Activated CD4-positive, alpha-beta T cell treated with anti-CD3 and anti-CD28 coated beads for 36 hours (primary cell): ENCODE measurements at regions of chr13 and their contacts with region 1.

Region 1: DNA sequence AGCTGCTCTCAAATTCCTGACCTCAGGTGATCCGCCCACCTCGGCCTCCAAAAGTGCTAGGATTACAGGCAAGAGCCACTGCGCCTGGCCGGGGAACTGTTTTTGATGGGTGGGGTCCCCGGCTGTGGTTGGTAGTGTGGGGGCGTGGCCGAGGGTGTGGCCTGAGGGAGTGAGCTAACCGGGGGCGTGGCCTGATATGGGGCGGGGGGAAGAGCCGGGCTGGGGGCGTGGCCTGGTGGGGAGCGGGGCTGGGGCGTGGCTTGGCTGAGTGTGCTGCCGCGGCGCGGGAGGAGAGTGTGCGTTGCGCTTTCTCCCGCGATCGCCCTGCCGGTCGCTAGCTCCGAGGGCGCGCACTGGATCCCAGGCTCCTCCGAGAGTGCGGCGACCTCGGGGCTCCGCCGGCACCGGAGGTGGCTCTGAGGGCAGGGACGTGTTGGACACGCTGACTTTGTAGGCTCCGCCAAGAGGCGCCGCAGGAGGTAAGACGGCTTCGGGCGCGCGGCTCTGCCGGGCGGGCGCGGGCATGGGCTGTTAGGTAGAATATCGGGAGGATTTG is at the start of gene SPATA13:
- DNase-seq: peak; percentile 97
- ATAC-seq: peak; percentile 95
- H3K4me3 Mint-ChIP-seq: peak within 1 kb of the TSS; percentile 83
- H3K27ac Mint-ChIP-seq: no peak within 1 kb of the TSS
- H3K4me1 Mint-ChIP-seq: peaks cover 12% of the 10 kb centered on the region
- H3K27me3 Mint-ChIP-seq: peaks cover 9% of the 10 kb centered on the region
- total RNA-seq, gene SPATA13: 47.6 to 51.5 TPM

Region 2: GRCh38 chr13:23888658-23889614 is 271.6 kb before region 1 on chr13 and contains the start of gene MIPEP:
- CTCF ChIA-PET with region 1: no interaction called
- POLR2A ChIA-PET with region 1: no interaction called
- intact Hi-C with region 1: loop called in 1 of 2 experiments (anchors 1 kb)
- DNase-seq: peak; percentile 94
- ATAC-seq: peak; percentile 90
- H3K4me3 Mint-ChIP-seq: peak within 1 kb of the TSS; percentile 79
- H3K27ac Mint-ChIP-seq: peak within 1 kb of the TSS; percentile 75
- H3K4me1 Mint-ChIP-seq: peaks cover 23% of the 10 kb centered on the region
- H3K27me3 Mint-ChIP-seq: no peaks in the 10 kb centered on the region
- total RNA-seq, gene MIPEP: 13.2 to 15.5 TPM

Region 3: DNA sequence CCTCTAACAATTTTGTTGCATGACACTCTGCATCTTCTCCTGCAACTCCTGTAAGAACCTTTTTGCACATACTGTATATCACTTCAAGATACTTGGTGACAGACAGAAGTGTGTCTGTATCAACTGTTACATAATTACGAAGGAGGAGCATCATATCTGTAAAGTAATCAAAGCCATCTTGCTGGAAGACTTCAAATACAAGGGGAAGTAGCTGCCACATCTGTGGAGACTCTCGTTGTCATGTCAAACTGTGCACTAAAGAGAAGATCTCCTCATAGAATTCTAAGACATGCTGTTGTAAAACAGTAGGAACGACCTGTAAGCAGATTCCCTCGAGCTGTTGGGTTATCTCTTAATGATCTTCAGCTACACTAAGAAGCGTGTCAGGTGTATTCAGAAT is 38.0 kb before region 1 on chr13:
- CTCF ChIA-PET with region 1: no interaction called
- POLR2A ChIA-PET with region 1: no interaction called
- intact Hi-C with region 1: loop called in 1 of 2 experiments (anchors 2 kb)
- DNase-seq: no peak
- ATAC-seq: no peak
- H3K4me3 Mint-ChIP-seq: no peak overlapping the region
- H3K27ac Mint-ChIP-seq: no peak overlapping the region
- H3K4me1 Mint-ChIP-seq: peaks cover 18% of the 10 kb centered on the region
- H3K27me3 Mint-ChIP-seq: peaks cover 28% of the 10 kb centered on the region

Region 4: DNA sequence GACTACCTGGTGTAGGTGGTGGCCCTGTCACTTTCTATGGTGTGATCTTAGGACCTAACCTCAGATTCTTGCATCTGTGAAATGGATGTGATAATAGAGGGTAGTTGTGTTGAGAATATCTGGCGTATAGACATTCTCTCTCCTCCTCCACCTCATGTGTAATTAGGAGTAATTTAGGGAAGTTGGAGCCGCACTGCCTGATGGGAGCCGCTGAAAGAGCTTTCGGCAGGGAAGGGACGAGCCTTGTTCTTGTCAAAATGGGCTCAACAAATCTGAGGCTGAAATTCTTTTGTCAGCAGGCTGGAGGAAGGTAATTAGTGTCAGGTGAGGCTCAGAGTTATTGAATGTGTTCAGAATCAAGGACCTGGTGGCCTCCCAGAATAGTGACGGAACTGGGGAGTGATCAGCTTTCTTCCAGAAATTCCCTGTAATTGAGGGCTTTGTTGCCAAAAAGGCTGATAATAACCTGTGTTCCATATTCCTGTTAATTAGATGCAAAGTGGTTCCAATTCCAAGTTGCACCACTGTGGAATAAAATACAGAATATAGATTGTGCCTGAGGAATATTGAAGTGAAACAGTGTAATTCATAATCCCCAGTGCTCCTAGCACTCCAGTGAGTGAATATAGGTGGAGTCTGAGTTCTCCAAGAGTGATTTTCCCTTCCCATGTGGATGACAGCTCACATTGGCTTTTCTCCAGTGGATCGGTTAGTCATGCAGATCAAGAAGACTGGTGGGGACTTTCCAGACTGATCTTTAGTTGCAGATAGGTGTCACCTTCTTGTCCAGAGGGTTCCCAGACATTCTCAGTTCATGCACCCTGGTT is 47.5 kb after region 1 on chr13:
- CTCF ChIA-PET with region 1: no interaction called
- POLR2A ChIA-PET with region 1: no interaction called
- intact Hi-C with region 1: no loop called
- DNase-seq: no peak
- ATAC-seq: no peak
- H3K4me3 Mint-ChIP-seq: no peak overlapping the region
- H3K27ac Mint-ChIP-seq: no peak overlapping the region
- H3K4me1 Mint-ChIP-seq: peaks cover 20% of the 10 kb centered on the region
- H3K27me3 Mint-ChIP-seq: no peaks in the 10 kb centered on the region

Region 5: GRCh38 chr13:24220086-24220703 is 59.7 kb after region 1 on chr13:
- CTCF ChIA-PET with region 1: interaction called, 4 read pairs
- POLR2A ChIA-PET with region 1: interaction called, 3 read pairs
- intact Hi-C with region 1: loop called in 1 of 2 experiments (anchors 1 kb)
- DNase-seq: peak; percentile 69
- ATAC-seq: peak; percentile 98
- H3K4me3 Mint-ChIP-seq: no peak overlapping the region
- H3K27ac Mint-ChIP-seq: no peak overlapping the region
- H3K4me1 Mint-ChIP-seq: peaks cover 29% of the 10 kb centered on the region
- H3K27me3 Mint-ChIP-seq: no peaks in the 10 kb centered on the region

Region 6: DNA sequence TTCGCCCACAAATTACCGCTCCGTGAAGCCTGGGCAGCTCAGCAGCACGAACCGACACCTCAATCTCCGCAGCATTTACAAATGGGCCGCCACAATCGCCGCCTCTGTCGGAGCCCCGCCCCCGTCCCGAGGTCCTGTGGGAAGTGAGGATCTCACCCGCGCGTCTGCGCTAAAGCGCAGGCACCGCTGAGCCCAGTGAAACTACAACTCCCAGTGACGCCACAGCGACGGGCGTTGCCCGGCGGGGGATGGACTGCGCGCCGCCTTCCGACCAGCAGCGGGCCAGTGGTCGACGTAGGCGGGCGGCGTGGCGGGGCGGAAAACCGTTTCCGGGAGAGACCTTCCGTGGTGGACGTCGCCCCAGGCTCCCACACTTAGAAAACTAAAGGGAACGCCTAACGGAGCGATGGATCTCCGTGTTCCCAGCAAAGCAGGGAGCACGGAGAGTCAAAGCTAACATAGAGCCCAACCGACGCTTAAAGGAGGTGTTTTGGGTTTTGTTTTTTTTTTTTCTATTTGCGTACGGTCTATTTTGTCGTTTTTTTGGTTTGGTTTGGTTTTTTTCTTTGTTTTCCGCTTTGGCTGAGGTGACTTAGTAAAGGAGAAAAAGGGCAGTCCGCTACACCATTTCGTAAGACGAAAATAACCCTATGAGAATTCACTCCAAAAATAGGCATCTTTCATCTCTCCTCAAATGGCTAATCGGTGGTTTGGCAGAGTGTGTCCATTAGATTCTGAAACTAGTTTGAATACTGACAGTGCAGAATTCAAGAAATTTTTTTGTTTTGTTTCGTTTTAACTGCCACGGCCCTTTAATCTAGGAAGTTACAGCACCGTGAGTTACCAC is 762.4 kb after region 1 on chr13:
- CTCF ChIA-PET with region 1: no interaction called
- POLR2A ChIA-PET with region 1: no interaction called
- intact Hi-C with region 1: loop called in 1 of 2 experiments (anchors 2 kb)
- DNase-seq: peak; percentile 96
- ATAC-seq: peak; percentile 100
- H3K4me3 Mint-ChIP-seq: peak overlapping the region; percentile 97
- H3K27ac Mint-ChIP-seq: peak overlapping the region; percentile 94
- H3K4me1 Mint-ChIP-seq: peaks cover 9% of the 10 kb centered on the region
- H3K27me3 Mint-ChIP-seq: peaks cover 2% of the 10 kb centered on the region